ENCODE measurements at regions of chr6 and their contacts with region 1.

Region 1: DNA sequence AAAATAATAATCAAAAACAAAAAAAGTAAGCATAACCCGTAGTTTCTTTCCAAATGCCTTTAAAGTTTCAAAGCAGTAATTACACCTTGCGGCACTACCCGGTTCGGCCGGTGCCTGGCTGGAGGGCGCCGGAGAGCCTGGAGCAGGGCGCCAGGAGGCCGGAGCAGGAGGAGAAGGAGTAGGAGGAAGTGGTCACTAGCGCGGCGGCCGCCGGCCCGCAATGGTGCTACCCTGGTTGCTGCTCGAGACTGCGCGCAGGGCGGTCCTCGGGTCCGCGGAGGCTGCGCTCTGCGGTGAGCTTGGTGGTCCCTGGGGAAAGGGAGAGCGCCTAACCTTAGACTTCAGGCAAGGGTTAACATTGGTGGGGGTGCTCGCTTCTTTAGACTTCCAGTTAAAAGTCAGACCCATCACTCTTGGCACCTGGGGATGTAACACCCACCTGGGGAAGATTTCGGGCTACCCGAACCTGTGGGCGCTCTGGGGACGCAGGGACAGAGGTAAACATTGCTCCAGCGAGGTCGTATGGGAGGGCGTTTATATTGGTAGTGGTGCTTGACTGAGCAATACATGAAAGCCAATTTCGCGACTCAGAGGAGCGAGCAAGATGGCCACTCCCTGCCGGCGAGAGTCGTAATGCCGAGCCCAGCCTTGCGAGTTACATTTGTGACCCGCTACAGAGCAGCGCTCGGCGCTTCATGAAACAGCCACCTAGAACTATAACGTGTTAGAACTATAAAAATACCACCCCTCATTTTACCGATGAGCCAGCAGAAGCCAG is 5.8 kb upstream of the USP45 start:
- DNase-seq: peak; percentile 80
- H3K4me3 Mint-ChIP-seq: peak overlapping the region; percentile 88
- H3K27ac Mint-ChIP-seq: peak overlapping the region; percentile 85
- H3K4me1 Mint-ChIP-seq: peaks cover 30% of the 10 kb centered on the region
- H3K27me3 Mint-ChIP-seq: peaks cover 9% of the 10 kb centered on the region

Region 2: DNA sequence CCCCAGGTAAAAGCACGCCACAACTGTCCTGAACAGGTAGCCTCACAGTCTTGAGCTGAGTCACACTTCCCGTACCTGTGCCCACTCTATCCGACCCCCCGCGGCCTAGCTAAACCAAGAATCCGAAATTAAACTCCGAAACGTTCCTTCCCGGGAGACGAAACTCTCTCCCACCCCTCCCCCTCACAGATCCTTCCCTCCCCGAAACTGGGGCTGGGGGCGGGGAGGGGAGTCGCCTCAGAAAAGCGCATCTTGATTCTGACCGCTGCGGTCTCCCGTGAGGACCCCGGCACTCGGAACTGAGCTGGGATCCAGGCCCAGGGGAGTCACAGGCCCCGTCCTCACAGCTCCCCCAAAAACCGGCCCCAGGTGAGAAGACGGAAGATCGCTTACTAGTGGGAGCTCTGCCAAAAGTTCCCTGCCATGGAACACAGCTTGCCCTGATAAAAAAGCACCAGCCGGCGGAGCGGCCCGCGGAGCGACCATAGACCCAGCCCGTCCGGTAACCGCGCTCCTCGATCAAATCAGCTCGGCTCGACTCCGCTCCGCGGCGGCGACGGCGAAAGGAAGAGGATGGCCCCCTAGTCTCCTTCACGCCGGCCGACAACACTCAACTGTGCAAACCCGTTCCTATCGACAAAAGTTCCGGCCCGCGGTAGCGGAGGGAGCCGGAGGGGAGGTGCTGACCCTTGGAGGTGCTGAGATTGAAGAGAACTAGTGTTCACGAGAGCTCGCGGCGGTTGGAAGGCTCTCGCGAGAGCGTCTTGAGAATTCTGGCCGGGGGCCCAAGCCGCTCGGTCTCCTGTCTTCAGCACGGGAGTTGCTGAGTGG is 47.3 kb after region 1 on chr6 and contains the start of gene CCNC:
- CTCF ChIA-PET with region 1: interaction called, 14 read pairs
- POLR2A ChIA-PET with region 1: interaction called, 13 read pairs
- DNase-seq: peak; percentile 90
- H3K4me3 Mint-ChIP-seq: peak within 1 kb of the TSS; percentile 98
- H3K27ac Mint-ChIP-seq: peak within 1 kb of the TSS; percentile 89
- H3K4me1 Mint-ChIP-seq: peaks cover 27% of the 10 kb centered on the region
- H3K27me3 Mint-ChIP-seq: no peaks in the 10 kb centered on the region
- total RNA-seq, gene CCNC: 41.5 to 45.4 TPM

Region 3: GRCh38 chr6:99618649-99619408 is 97.8 kb after region 1 on chr6:
- CTCF ChIA-PET with region 1: no interaction called
- POLR2A ChIA-PET with region 1: no interaction called
- DNase-seq: no peak
- H3K4me3 Mint-ChIP-seq: no peak overlapping the region
- H3K27ac Mint-ChIP-seq: no peak overlapping the region
- H3K4me1 Mint-ChIP-seq: peaks cover 9% of the 10 kb centered on the region
- H3K27me3 Mint-ChIP-seq: peaks cover 83% of the 10 kb centered on the region

Measured in activated CD4-positive, alpha-beta memory T cell treated with anti-CD3 and anti-CD28 coated beads, Interleukin-2, amount 10 ng/mL, durations not matched to agents 7 days and 5 days (primary cell).